K562 (cell line): ENCODE measurements at regions of chr17 and their contacts with region 1.

Region 1: GRCh38 chr17:7989781-7990655 is 12.4 kb upstream of the GUCY2D start:
- DNase-seq: peak; percentile 80 to 82 (median 82)
- ATAC-seq: peak; percentile 93
- H3K4me3 ChIP-seq: peak overlapping the region; percentile 52
- H3K27ac ChIP-seq: no peak overlapping the region
- H3K4me1 ChIP-seq: peaks cover 0 to 11% of the 10 kb centered on the region in 2 experiments; a peak in 2 of 5 replicates
- H3K27me3 ChIP-seq: peaks cover 10 to 33% of the 10 kb centered on the region in 2 experiments; a peak in 4 of 5 replicates
- CTCF ChIP-seq: peak; percentile 79 to 84 (median 82)
- EP300 ChIP-seq: no peak
- POLR2A ChIP-seq: no peak
- RAD21 ChIP-seq: peak; percentile 27 to 68; a peak in 3 of 4 replicates

Region 2: DNA sequence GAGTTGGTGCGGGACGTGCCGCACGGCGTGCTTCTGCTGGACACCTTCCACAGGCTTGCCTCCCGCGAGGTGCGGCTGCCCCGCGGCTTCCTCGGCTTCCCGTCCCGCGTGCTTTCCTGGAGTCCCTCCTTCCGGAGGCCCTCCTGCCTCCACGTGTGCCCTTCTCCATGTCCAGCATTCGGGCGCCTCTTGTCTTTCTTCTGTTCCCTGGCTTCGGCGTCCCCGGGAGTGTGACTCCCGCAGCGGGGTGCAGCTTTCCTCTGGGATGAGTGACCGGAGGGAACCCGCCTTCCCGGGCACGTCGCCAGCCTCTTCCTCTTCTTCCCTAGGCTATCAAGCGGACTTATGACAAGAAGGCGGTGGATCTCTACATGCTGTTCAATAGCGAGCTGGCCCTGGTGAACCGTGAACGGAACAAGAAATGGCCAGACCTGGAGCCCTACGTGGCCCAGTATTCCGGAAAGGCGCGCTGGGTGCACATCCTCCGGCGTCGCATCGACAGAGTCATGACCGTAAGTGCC is 249.5 kb before region 1 on chr17:
- CTCF ChIA-PET with region 1: interaction called, 7 read pairs
- POLR2A ChIA-PET with region 1: no interaction called
- in situ Hi-C with region 1: loop called (anchors 10 kb)
- intact Hi-C with region 1: loop called (anchors 1 kb)
- DNase-seq: no peak
- ATAC-seq: no peak
- H3K4me3 ChIP-seq: no peak overlapping the region
- H3K27ac ChIP-seq: no peak overlapping the region
- H3K4me1 ChIP-seq: peaks cover 0 to 4% of the 10 kb centered on the region in 2 experiments; a peak in 3 of 5 replicates
- H3K27me3 ChIP-seq: peaks cover 18 to 48% of the 10 kb centered on the region in 2 experiments; a peak in 4 of 5 replicates
- CTCF ChIP-seq: no peak
- EP300 ChIP-seq: no peak
- POLR2A ChIP-seq: no peak
- RAD21 ChIP-seq: no peak

Region 3: DNA sequence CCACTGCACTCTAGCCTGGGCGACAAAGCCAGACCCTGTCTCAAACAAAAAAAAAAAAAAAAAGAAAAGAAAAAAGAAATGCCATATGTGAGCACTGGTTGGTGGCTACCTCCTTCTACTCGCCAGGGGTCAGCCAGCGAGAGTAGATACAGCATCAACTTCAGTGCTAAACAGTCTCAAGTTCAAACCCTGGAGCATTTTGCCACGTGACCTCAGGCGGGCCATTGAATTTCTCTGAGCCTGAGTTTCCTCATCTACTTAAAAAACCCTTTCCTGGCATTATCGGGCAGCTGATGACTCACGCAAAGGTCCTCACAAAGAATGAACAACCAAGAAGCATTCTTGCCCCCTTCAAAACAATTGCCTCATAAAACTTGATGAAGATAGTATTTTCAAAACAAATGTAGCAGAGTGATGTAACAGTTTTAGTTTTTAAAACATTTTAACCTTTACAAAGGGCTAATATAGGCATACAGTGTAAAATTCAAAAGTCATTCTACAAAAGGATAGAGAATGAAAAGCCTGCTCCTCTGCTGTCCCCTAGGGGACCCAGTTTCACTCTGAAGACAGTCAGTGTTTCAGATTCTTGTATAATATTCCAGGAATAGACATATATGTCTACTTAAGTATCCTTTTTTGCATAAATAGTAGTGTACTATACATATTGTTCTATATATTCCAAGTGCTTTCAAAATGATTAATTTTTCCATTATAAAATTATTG is 244.1 kb before region 1 on chr17:
- CTCF ChIA-PET with region 1: interaction called, 7 read pairs
- POLR2A ChIA-PET with region 1: no interaction called
- in situ Hi-C with region 1: loop called (anchors 10 kb)
- intact Hi-C with region 1: loop called (anchors 1 kb)
- DNase-seq: peak in 2 of 4 experiments; percentile 11 to 33
- ATAC-seq: peak; percentile 72
- H3K4me3 ChIP-seq: no peak overlapping the region
- H3K27ac ChIP-seq: no peak overlapping the region
- H3K4me1 ChIP-seq: no peaks in the 10 kb centered on the region; a peak in 2 of 5 replicates
- H3K27me3 ChIP-seq: peaks cover under 1 to 13% of the 10 kb centered on the region in 2 experiments; a peak in 3 of 5 replicates
- CTCF ChIP-seq: peak in 1 of 3 experiments; percentile 16; a peak in 1 of 6 replicates
- EP300 ChIP-seq: no peak
- POLR2A ChIP-seq: no peak
- RAD21 ChIP-seq: no peak

Region 4: DNA sequence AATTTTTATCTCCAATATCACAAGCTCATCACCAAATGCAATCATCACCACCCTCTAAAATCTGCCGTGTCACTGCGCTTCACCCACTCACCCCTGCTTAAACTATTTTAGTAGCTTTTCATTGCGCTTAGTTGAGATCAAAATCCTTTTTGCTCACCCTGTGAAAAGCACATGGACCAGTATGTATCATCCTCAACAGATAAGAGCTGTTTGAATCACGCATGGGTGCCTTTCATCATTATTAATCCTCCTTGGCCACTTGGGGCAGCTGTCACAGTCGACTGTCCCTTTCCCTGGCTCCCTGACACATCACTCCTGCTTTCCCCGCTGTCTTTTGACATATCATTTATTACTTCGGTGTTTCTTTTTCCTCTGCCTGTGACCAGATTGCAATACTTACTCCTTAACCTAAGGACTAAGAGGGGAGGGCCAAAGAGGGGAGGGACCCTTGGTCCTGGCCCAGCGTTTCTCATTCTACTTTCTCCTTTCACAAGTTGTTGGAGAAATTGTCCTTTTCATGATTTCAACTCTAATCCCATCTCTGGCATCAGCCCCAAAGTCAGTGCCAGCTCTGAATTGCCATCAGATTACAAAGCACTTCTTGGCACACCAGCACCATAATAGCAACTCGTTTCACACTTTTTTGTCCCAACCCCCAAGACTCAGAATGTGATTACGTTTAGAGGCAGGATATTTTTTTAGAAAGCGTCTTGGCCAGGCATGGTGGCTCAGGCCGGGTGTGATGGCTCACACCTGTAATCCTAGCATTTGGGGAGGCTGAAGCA is 164.6 kb before region 1 on chr17:
- CTCF ChIA-PET with region 1: interaction called, 14 read pairs
- POLR2A ChIA-PET with region 1: no interaction called
- in situ Hi-C with region 1: no loop called
- intact Hi-C with region 1: loop called (anchors 5 kb)
- DNase-seq: peak in 1 of 4 experiments; percentile 29
- ATAC-seq: 0 out of 3 replicates have a peak, but pooled peaks have one; percentile 47
- H3K4me3 ChIP-seq: no peak overlapping the region
- H3K27ac ChIP-seq: no peak overlapping the region
- H3K4me1 ChIP-seq: peaks cover 0 to 9% of the 10 kb centered on the region in 2 experiments; a peak in 2 of 5 replicates
- H3K27me3 ChIP-seq: peaks cover 9 to 32% of the 10 kb centered on the region in 2 experiments; a peak in 4 of 5 replicates
- CTCF ChIP-seq: peak; percentile 16 to 42 (median 35); a peak in 3 of 6 replicates
- EP300 ChIP-seq: no peak
- POLR2A ChIP-seq: no peak
- RAD21 ChIP-seq: no peak

Region 5: DNA sequence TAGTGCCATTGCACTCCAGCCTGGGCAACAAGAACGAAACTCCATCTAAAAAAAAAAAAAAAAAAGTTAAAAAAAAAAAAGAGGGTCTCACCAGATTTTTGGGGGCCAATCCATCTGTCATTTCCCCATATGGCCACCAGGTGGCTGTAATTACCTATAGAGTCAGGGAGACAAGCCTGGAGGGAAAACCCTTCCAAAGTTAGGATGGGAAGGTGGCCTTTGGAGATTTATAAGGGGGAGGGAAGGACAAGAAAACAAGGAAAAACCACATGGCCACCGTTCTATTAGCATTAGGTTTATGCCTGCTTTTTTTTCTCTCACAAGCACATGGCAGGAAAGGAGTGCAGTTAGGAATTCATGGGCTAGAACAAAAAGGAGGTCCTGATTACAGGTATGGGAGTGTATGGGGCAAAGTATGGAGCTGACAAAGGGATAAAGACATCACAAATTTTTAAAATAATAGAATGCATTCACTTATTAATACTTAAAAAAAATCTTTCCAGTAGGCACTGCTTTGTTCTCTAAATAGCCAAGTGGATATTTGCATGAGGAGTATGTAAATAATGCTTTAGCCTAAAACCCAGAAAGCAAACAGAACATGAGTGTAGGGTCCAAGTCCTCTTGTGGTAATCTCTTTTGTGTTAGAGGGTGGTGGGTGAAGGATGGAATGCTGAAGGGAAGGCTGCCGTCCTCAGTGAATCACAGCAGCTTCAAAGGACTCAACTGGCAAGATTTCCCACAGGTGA is 127.2 kb before region 1 on chr17:
- CTCF ChIA-PET with region 1: interaction called, 18 read pairs
- POLR2A ChIA-PET with region 1: interaction called, 3 read pairs
- in situ Hi-C with region 1: no loop called
- intact Hi-C with region 1: loop called (anchors 1 kb)
- DNase-seq: peak; percentile 30 to 48 (median 41)
- ATAC-seq: no peak
- H3K4me3 ChIP-seq: no peak overlapping the region
- H3K27ac ChIP-seq: no peak overlapping the region
- H3K4me1 ChIP-seq: peaks cover 6 to 10% of the 10 kb centered on the region in 2 experiments; a peak in 4 of 5 replicates
- H3K27me3 ChIP-seq: no peaks in the 10 kb centered on the region
- CTCF ChIP-seq: peak; percentile 53 to 69 (median 60)
- EP300 ChIP-seq: no peak
- POLR2A ChIP-seq: no peak
- RAD21 ChIP-seq: peak; percentile 55 to 69

Region 6: DNA sequence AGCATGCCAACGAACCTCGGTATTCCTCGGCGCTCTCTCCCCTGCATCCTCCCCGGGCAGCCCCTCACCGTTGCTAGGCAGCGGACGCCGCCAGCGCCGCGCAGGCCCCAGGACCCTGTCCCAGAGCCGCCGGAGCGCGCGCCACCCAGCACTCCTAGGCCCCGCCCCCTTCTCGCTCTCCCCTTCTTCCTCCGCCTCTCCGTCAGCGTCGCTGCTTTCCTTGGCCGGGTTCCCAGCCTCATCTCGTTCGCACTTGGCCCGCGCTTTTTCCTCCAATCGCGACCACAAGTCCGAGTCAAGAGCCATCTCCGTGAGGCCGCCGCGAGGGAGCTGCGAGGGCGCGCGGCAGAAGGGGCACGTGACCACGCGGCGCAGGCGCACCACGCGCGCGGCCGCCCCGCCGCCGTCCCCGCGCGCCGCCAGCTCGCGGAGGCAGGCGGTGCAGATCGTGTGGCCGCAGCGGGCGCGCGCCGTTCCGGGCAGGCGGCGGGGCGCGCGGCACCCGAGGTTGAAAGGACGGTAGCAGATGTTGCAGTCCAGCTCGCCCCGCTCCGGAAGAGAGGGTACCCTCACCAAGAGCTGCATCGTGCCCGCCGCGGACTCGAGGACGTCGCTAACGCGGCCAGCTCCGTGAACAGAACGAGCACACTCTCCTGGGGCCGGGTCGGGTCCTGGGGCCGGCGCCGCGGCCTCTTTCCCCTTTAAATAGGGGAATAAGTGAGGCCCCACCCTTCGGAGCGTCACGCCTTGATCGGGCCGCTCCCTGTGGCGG is 74.2 kb before region 1 on chr17 and contains the start of gene RNF227:
- CTCF ChIA-PET with region 1: interaction called, 52 read pairs
- POLR2A ChIA-PET with region 1: no interaction called
- in situ Hi-C with region 1: loop called (anchors 5 kb)
- intact Hi-C with region 1: loop called (anchors 1 kb)
- DNase-seq: peak; percentile 72 to 92 (median 74)
- ATAC-seq: peak; percentile 87
- H3K4me3 ChIP-seq: peak within 1 kb of the TSS; percentile 46
- H3K27ac ChIP-seq: peak within 1 kb of the TSS; percentile 88
- H3K4me1 ChIP-seq: peaks cover 18 to 24% of the 10 kb centered on the region in 2 experiments; a peak in 4 of 5 replicates
- H3K27me3 ChIP-seq: no peaks in the 10 kb centered on the region
- CTCF ChIP-seq: no peak
- EP300 ChIP-seq: no peak
- POLR2A ChIP-seq: peak; percentile 70
- RAD21 ChIP-seq: no peak
- polyA plus RNA-seq, gene RNF227: 1.1 to 1.5 TPM